ENCODE measurements at regions of chr10 and their contacts with region 1.

Region 1: DNA sequence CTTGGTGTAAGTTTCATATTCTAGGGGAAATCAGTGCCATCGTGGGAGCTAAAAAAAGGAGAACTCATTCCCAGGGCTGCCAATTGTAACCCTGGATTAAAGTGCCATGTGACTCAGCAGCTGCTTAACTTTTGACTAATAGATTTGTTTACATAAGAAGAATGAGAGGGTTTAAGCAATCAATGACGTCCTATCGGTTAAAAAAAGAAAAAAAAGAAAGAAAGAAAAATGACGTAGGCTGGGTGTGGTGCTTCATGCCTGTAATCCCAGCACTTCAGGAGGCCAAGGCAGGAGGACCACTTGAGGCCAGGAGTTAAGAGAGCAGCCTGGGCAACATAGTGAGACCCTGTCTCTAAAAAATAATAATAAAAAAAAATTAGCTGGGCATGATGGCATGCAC is 116.2 kb upstream of the AFAP1L2 start:
- DNase-seq: no peak
- ATAC-seq: no peak
- H3K4me3 Mint-ChIP-seq: no peak overlapping the region
- H3K27ac Mint-ChIP-seq: peak overlapping the region; percentile 50
- H3K4me1 Mint-ChIP-seq: peaks cover 95% of the 10 kb centered on the region
- H3K27me3 Mint-ChIP-seq: no peaks in the 10 kb centered on the region
- CTCF ChIP-seq: no peak

Region 2: GRCh38 chr10:114499630-114500190 is 20.7 kb before region 1 on chr10:
- CTCF ChIA-PET with region 1: interaction called, 24 read pairs
- POLR2A ChIA-PET with region 1: interaction called, 268 read pairs
- intact Hi-C with region 1: no loop called
- DNase-seq: peak; percentile 37
- ATAC-seq: peak; percentile 49
- H3K4me3 Mint-ChIP-seq: peak overlapping the region; percentile 67
- H3K27ac Mint-ChIP-seq: peak overlapping the region; percentile 96
- H3K4me1 Mint-ChIP-seq: peaks cover 83% of the 10 kb centered on the region
- H3K27me3 Mint-ChIP-seq: no peaks in the 10 kb centered on the region
- CTCF ChIP-seq: no peak

Region 3: DNA sequence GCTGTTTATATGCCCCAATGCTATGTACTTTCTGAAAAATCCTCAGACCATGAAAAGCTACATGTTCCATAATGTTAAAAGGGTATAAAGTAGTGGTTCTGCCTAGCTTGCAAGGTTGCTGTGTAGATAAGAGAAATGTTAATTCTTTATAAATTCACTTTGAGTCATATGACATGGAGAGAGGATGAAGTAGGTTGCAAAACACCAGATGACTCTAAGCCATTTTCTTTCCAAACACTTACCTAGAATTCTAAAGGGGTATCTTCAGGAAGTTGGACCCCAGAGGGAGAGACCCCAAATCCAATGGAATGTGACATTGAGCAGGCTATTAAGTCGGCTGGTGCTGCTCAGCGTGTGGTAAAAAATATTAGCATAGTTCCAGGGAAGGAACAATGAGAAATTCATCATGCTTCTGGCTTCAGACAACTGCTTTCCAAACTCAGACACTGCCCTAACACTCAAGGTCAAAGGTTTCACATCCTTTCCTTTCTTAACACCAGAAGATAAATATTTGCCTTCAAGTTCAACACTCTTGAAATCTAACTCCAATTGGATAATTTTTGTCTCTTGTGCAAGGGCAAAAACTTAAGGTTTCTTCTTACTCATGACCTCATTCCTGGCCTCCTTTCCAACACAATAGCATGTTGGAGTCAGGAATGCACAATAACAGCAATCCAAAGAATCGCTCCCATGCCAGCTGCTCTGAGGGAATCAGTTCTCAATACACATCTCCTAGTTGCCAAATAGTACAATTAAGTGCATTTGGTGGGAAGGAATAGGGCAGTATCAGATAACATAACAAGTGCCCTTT is 15.5 kb before region 1 on chr10:
- CTCF ChIA-PET with region 1: interaction called, 5 read pairs
- POLR2A ChIA-PET with region 1: interaction called, 268 read pairs
- intact Hi-C with region 1: loop called (anchors 1 kb)
- DNase-seq: no peak
- ATAC-seq: no peak
- H3K4me3 Mint-ChIP-seq: no peak overlapping the region
- H3K27ac Mint-ChIP-seq: peak overlapping the region; percentile 6
- H3K4me1 Mint-ChIP-seq: peaks cover 78% of the 10 kb centered on the region
- H3K27me3 Mint-ChIP-seq: no peaks in the 10 kb centered on the region
- CTCF ChIP-seq: no peak